Activated naive CD4-positive, alpha-beta T cell treated with anti-CD3 and anti-CD28 coated beads for 36 hours (primary cell): ENCODE measurements at regions of chr1 and their contacts with region 1.

Region 1: GRCh38 chr1:206734499-206735142 is 36.0 kb upstream of the IL19 start:
- DNase-seq: peak; percentile 88
- H3K4me3 Mint-ChIP-seq: no peak overlapping the region
- H3K27ac Mint-ChIP-seq: no peak overlapping the region
- H3K4me1 Mint-ChIP-seq: peaks cover 53% of the 10 kb centered on the region
- H3K27me3 Mint-ChIP-seq: no peaks in the 10 kb centered on the region

Region 2: GRCh38 chr1:206761159-206761768 is 26.6 kb after region 1 on chr1:
- CTCF ChIA-PET with region 1: interaction called, 29 read pairs
- intact Hi-C with region 1: no loop called
- DNase-seq: no peak
- H3K4me3 Mint-ChIP-seq: no peak overlapping the region
- H3K27ac Mint-ChIP-seq: no peak overlapping the region
- H3K4me1 Mint-ChIP-seq: peaks cover 22% of the 10 kb centered on the region
- H3K27me3 Mint-ChIP-seq: no peaks in the 10 kb centered on the region

Region 3: DNA sequence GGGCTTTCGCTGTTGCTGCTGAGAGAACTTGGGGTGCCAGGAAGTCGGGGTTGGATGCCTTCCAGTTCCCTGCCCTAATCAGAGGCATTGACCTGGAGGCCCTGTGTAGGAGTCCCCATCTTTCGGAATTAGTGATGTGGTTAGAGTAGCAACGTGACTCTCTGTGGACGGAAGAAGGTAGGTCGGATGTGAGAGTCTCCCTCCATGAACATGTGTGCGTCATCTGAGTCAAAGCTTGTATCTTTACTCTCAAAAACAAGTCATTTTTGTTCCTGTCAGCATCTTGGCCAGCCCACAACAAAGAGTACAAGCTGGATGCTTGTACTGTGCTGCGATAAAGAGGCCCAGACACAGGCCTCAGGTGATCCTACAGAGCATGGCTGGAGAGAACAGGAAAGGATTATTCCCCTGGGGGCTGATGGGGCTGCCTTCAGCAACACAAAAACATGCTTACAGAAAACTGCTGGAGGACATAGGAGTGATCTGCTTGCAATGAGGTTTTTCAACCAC is 68.7 kb after region 1 on chr1:
- CTCF ChIA-PET with region 1: interaction called, 232 read pairs
- intact Hi-C with region 1: loop called (anchors 1 kb)
- DNase-seq: peak; percentile 92
- H3K4me3 Mint-ChIP-seq: no peak overlapping the region
- H3K27ac Mint-ChIP-seq: peak overlapping the region; percentile 82
- H3K4me1 Mint-ChIP-seq: peaks cover 59% of the 10 kb centered on the region
- H3K27me3 Mint-ChIP-seq: peaks cover 7% of the 10 kb centered on the region

Region 4: GRCh38 chr1:206839857-206840256 is 105.2 kb after region 1 on chr1:
- CTCF ChIA-PET with region 1: no interaction called
- intact Hi-C with region 1: no loop called
- DNase-seq: no peak
- H3K4me3 Mint-ChIP-seq: no peak overlapping the region
- H3K27ac Mint-ChIP-seq: no peak overlapping the region
- H3K4me1 Mint-ChIP-seq: peaks cover 3% of the 10 kb centered on the region
- H3K27me3 Mint-ChIP-seq: no peaks in the 10 kb centered on the region

Region 5: GRCh38 chr1:206905280-206906164 is 170.9 kb after region 1 on chr1:
- CTCF ChIA-PET with region 1: interaction called, 19 read pairs
- intact Hi-C with region 1: no loop called
- DNase-seq: peak; percentile 88
- H3K4me3 Mint-ChIP-seq: peak overlapping the region; percentile 40
- H3K27ac Mint-ChIP-seq: peak overlapping the region; percentile 96
- H3K4me1 Mint-ChIP-seq: peaks cover 88% of the 10 kb centered on the region
- H3K27me3 Mint-ChIP-seq: no peaks in the 10 kb centered on the region

Region 6: DNA sequence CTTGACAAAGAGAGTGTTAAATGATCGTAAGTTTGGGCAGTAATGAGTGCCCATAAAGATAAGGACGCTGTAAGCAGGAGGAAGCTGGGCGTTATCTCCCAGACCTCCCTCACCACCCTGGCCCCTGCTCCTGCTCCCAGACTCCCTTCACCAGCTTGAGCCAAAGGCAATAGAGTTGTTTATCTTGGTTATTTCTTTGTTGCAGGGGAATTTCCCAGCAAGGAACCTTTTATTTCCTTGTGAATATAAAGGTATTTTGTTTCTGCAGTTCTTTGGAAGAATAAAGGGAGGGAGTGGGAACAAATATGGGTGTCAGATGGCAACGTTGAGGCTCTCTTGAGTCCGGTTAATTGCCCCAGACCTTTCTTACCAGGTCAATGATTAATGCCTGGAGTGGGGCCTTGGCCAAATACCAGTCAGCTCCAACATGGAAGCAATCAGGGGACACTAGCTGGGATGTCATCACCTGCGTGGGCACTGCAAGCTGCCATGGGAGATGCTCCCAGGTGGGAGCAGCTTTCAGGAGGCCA is 207.3 kb after region 1 on chr1:
- CTCF ChIA-PET with region 1: no interaction called
- intact Hi-C with region 1: no loop called
- DNase-seq: no peak
- H3K4me3 Mint-ChIP-seq: no peak overlapping the region
- H3K27ac Mint-ChIP-seq: no peak overlapping the region
- H3K4me1 Mint-ChIP-seq: no peaks in the 10 kb centered on the region
- H3K27me3 Mint-ChIP-seq: peaks cover 2% of the 10 kb centered on the region

Region 7: DNA sequence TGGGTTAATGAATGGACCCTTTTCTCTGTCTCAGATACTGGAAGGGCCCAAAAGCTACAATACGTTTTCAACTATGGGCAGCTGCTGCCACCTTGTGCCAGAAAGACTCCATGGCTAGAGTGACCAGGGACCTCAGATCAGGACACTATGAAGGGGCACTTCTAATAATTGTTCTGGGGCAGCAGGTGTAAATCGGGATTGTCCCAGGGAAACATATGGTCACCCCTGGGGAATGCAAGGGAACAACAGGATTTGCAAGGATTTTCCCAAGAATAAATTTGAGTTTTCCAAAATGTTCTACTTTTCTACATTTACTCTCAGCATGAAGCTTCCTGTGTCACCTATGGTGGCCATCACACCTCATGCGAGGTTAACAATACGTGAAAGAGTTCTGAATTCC is 247.6 kb after region 1 on chr1:
- CTCF ChIA-PET with region 1: interaction called, 39 read pairs
- intact Hi-C with region 1: loop called (anchors 2 kb)
- DNase-seq: peak; percentile 78
- H3K4me3 Mint-ChIP-seq: no peak overlapping the region
- H3K27ac Mint-ChIP-seq: no peak overlapping the region
- H3K4me1 Mint-ChIP-seq: no peaks in the 10 kb centered on the region
- H3K27me3 Mint-ChIP-seq: no peaks in the 10 kb centered on the region

Region 8: DNA sequence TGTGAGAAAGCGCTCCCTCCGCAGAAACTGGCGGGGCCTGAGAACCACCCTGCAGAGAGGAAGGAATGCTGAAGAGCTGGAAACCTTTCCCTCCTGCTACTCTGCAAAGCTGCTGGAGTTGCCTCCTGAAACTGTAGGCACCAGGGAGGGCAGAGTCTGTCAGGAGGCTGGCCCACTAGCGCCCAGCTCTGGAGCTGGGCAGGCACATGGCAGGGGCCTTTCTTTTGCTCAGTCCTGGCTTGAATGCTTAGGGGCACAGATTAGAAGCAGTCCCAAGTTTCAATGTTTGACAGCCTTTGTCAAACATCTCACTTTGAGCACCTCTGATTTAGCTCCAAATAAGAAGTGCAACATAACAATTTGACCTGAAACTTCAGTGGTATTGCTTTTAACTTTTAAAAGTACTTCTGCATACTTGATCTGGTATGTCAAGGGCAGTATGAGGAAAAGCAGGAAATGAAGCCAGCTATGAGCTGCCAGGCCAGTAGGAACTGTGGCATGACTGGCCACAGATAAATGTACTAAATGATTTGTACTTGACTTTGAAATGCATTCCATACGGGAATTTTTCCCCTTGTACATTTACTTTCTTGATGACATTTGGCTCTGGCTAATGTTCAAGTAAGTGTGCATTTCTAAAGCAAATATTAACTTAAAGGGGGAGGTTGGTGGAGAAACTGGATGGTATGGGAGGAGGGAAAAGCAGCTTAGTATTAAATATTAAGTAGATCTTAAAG is 290.7 kb after region 1 on chr1:
- CTCF ChIA-PET with region 1: no interaction called
- intact Hi-C with region 1: no loop called
- DNase-seq: no peak
- H3K4me3 Mint-ChIP-seq: no peak overlapping the region
- H3K27ac Mint-ChIP-seq: no peak overlapping the region
- H3K4me1 Mint-ChIP-seq: peaks cover 3% of the 10 kb centered on the region
- H3K27me3 Mint-ChIP-seq: peaks cover 5% of the 10 kb centered on the region

Region 9: GRCh38 chr1:207298653-207299346 is 564.2 kb after region 1 on chr1:
- CTCF ChIA-PET with region 1: no interaction called
- intact Hi-C with region 1: no loop called
- DNase-seq: no peak
- H3K4me3 Mint-ChIP-seq: no peak overlapping the region
- H3K27ac Mint-ChIP-seq: no peak overlapping the region
- H3K4me1 Mint-ChIP-seq: peaks cover 21% of the 10 kb centered on the region
- H3K27me3 Mint-ChIP-seq: no peaks in the 10 kb centered on the region